ENCODE measurements at regions of chr2 and their contacts with region 1.

Region 1: DNA sequence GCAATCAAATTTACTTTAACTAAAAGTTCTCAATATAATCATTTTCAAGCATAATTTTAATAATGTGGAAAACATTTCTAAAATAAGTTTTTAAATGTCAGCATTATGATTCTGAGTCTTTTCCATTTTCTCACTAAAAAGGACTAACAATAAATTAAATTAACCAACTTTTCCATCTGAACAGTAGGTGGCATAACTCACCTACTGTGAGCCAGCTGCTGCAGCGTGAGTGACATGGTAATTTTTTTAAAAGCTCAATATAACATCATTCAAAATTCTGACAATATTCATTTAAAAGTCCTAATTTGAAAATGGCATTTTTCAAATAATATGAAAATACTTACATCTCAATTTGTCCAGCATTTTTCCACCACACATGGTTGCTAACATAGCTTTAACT is 66.5 kb downstream of the DTNB start:
- DNase-seq: no peak
- H3K4me3 ChIP-seq: no peak overlapping the region
- H3K27ac ChIP-seq: no peak overlapping the region
- H3K4me1 ChIP-seq: peaks cover 3 to 6% of the 10 kb centered on the region in 2 donors
- H3K27me3 ChIP-seq: no peaks in the 10 kb centered on the region
- CTCF ChIP-seq: peak; percentile 22 to 81 (median 53)
- POLR2A ChIP-seq: no peak

Region 2: GRCh38 chr2:25557179-25558036 is 49.5 kb before region 1 on chr2:
- intact Hi-C with region 1: no loop called
- DNase-seq: peak in 1 of 2 donors; percentile 30
- H3K4me3 ChIP-seq: no peak overlapping the region
- H3K27ac ChIP-seq: peak overlapping the region in 1 of 3 donors; percentile 13
- H3K4me1 ChIP-seq: peaks cover 9 to 11% of the 10 kb centered on the region in 2 donors
- H3K27me3 ChIP-seq: no peaks in the 10 kb centered on the region
- CTCF ChIP-seq: no peak
- POLR2A ChIP-seq: no peak

Region 3: GRCh38 chr2:25664183-25664964 is 57.5 kb after region 1 on chr2:
- intact Hi-C with region 1: loop called (anchors 5 kb)
- DNase-seq: peak; percentile 70 to 82
- H3K4me3 ChIP-seq: no peak overlapping the region
- H3K27ac ChIP-seq: peak overlapping the region in 2 of 3 donors; percentile 17 to 36
- H3K4me1 ChIP-seq: peaks cover 8 to 20% of the 10 kb centered on the region in 2 donors
- H3K27me3 ChIP-seq: no peaks in the 10 kb centered on the region
- CTCF ChIP-seq: peak in 5 of 6 experiments; percentile 19 to 85 (median 69)
- POLR2A ChIP-seq: no peak

Region 4: GRCh38 chr2:26008822-26009566 is 402.1 kb after region 1 on chr2:
- intact Hi-C with region 1: no loop called
- DNase-seq: peak; percentile 63 to 69
- H3K4me3 ChIP-seq: no peak overlapping the region
- H3K27ac ChIP-seq: peak overlapping the region in 2 of 3 donors; percentile 36 to 59
- H3K4me1 ChIP-seq: peaks cover 36% of the 10 kb centered on the region in 2 donors
- H3K27me3 ChIP-seq: no peaks in the 10 kb centered on the region
- CTCF ChIP-seq: no peak
- POLR2A ChIP-seq: no peak

Region 5: GRCh38 chr2:26235085-26235484 is 628.2 kb after region 1 on chr2:
- intact Hi-C with region 1: no loop called
- DNase-seq: no peak
- H3K4me3 ChIP-seq: no peak overlapping the region
- H3K27ac ChIP-seq: no peak overlapping the region
- H3K4me1 ChIP-seq: peaks cover 0 to under 1% of the 10 kb centered on the region in 2 donors
- H3K27me3 ChIP-seq: no peaks in the 10 kb centered on the region
- CTCF ChIP-seq: peak in 2 of 6 experiments; percentile 23 to 29
- POLR2A ChIP-seq: no peak